ENCODE measurements at regions of chr2 and their contacts with region 1.

Region 1: GRCh38 chr2:36607947-36608346 is 10.0 kb upstream of the FEZ2 start:
- DNase-seq: no peak
- ATAC-seq: peak in 2 of 4 donors; percentile 59 to 74
- H3K4me3 ChIP-seq: no peak overlapping the region
- H3K27ac ChIP-seq: no peak overlapping the region
- H3K4me1 ChIP-seq: peaks cover 5% of the 10 kb centered on the region
- H3K27me3 ChIP-seq: no peaks in the 10 kb centered on the region
- CTCF ChIP-seq: no peak

Region 2: DNA sequence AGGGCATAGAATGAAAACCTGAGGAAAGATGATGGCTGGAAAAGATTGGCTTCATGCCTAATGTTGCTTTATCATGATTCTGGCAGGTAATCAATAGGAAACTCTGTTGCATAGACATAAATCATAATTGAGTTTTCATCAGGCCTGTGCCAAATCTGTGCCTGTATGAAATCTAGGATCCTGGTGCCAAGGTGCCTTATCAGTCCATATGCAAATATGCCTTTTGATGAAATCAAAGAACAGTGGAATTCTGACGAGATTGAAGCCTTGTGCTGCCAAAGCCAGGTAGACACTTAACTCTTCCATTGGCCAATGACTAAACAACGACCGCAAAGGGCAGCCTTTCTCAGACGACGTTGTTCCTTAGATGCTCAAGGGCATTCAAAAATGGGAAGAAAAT is 422.3 kb before region 1 on chr2:
- intact Hi-C with region 1: no loop called
- DNase-seq: no peak
- ATAC-seq: no peak
- H3K4me3 ChIP-seq: no peak overlapping the region
- H3K27ac ChIP-seq: no peak overlapping the region
- H3K4me1 ChIP-seq: no peaks in the 10 kb centered on the region
- H3K27me3 ChIP-seq: peaks cover 0 to 3% (median 0%) of the 10 kb centered on the region in 3 donors
- CTCF ChIP-seq: no peak

Region 3: GRCh38 chr2:36634971-36635597 is 27.1 kb after region 1 on chr2:
- intact Hi-C with region 1: loop called in 1 of 2 experiments (anchors 5 kb)
- DNase-seq: no peak
- ATAC-seq: no peak
- H3K4me3 ChIP-seq: no peak overlapping the region
- H3K27ac ChIP-seq: no peak overlapping the region
- H3K4me1 ChIP-seq: no peaks in the 10 kb centered on the region
- H3K27me3 ChIP-seq: no peaks in the 10 kb centered on the region
- CTCF ChIP-seq: no peak

Measured in psoas muscle (tissue), 8 donors.